Activated CD4-positive, alpha-beta memory T cell treated with anti-CD3 and anti-CD28 coated beads for 36 hours (primary cell): ENCODE measurements at regions of chr11 and their contacts with region 1.

Region 1: DNA sequence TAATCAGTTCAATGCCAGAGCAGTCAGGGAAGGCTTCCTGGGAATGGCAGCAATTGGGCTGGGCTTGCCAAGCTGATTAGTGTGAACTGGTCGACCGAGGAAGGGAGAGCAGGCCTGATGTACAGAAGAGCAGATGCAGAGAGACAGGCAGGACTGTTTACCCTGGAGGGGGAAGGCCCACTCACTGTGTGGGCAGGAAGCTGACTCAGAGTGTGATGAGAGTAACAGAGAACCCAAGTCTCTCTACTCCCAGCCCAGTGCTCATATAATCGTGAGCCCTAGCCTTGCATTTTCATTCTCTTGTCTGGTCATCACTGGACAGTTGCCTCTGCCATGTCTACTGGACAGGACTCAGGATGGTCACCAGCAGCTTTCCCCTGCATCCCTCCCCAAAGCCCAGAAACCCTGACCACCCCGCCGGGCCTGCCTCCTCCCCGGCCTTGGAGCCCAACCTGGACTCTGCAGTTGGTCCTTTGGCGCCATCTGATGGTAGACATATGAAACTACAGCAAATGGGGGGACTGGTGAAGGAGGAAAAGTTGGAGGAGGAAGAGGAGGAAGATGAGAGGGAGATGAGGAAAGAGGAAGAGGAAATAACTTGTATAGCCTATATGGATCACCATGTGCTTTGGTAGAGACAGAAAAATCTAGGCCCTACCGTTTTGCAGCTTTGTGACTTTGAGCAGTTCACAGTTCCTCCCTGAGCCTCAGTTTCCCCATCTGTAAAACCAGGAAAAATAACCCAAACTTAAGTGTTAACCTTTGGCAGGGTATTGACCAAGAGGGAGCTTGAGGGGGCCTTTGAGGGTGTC is 43.4 kb upstream of the PRDM11 start:
- DNase-seq: peak; percentile 86
- H3K4me3 Mint-ChIP-seq: peak overlapping the region; percentile 66
- H3K27ac Mint-ChIP-seq: peak overlapping the region; percentile 68
- H3K4me1 Mint-ChIP-seq: peaks cover 12% of the 10 kb centered on the region
- H3K27me3 Mint-ChIP-seq: peaks cover 12% of the 10 kb centered on the region

Region 2: DNA sequence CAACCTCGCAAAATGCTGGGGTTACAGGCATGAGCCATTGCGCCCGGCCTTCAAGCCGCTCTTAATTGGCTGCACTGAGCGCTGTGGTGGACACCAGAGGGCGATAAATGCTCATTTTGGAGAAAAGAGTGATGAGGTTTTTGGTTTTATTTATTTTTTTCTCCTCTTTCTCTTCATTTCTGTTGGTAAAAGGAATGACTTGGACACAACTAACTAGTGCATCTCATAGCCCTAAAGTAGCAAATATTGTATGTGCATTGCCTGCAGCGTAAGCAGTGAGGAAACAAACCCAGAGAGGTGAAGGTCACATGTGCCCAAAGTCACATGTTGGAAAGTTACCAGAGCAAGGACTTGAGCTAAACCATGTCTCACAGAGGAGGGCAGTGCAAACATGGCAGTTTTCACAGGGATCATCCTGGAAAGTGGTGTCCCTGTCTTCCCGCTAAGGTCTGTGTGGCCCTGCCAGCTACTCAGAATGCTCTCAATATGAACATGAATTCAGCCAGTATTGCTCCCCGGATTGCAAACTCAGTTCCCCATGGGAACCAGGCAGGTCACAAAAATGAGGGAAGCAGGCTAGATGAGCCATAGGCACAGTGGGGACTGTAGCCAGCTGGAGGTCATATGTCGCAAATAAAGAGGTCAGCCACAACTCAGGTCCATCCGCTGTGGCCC is 546.1 kb before region 1 on chr11:
- CTCF ChIA-PET with region 1: no interaction called
- POLR2A ChIA-PET with region 1: no interaction called
- intact Hi-C with region 1: loop called (anchors 10 kb)
- DNase-seq: peak; percentile 79
- H3K4me3 Mint-ChIP-seq: no peak overlapping the region
- H3K27ac Mint-ChIP-seq: no peak overlapping the region
- H3K4me1 Mint-ChIP-seq: peaks cover 29% of the 10 kb centered on the region
- H3K27me3 Mint-ChIP-seq: no peaks in the 10 kb centered on the region

Region 3: DNA sequence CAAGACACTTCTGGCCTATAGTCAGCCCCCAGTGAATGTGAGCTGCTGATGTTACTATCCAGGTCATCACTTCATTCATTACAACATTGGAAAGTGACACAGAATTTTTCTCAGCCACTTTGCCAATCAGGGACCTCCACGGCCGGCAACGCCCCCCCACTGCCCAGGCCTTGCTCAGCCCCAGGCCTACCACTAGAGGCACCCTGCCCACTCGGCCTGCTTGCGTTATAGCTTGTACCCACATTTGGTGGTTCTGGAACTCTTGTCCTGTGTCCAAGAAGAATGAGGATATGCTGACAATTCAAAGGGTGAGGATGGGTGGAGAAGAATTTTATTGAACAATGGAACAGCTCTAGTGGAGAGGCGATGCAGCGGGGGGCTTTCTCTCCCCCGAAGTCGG is 280.0 kb before region 1 on chr11:
- CTCF ChIA-PET with region 1: no interaction called
- POLR2A ChIA-PET with region 1: no interaction called
- intact Hi-C with region 1: no loop called
- DNase-seq: peak; percentile 23
- H3K4me3 Mint-ChIP-seq: no peak overlapping the region
- H3K27ac Mint-ChIP-seq: no peak overlapping the region
- H3K4me1 Mint-ChIP-seq: peaks cover 4% of the 10 kb centered on the region
- H3K27me3 Mint-ChIP-seq: no peaks in the 10 kb centered on the region

Region 4: GRCh38 chr11:44936525-44936924 is 166.5 kb before region 1 on chr11:
- CTCF ChIA-PET with region 1: interaction called, 1,143 read pairs
- POLR2A ChIA-PET with region 1: interaction called, 6 read pairs
- intact Hi-C with region 1: loop called (anchors 1 kb)
- DNase-seq: peak; percentile 89
- H3K4me3 Mint-ChIP-seq: no peak overlapping the region
- H3K27ac Mint-ChIP-seq: no peak overlapping the region
- H3K4me1 Mint-ChIP-seq: no peaks in the 10 kb centered on the region
- H3K27me3 Mint-ChIP-seq: no peaks in the 10 kb centered on the region

Region 5: DNA sequence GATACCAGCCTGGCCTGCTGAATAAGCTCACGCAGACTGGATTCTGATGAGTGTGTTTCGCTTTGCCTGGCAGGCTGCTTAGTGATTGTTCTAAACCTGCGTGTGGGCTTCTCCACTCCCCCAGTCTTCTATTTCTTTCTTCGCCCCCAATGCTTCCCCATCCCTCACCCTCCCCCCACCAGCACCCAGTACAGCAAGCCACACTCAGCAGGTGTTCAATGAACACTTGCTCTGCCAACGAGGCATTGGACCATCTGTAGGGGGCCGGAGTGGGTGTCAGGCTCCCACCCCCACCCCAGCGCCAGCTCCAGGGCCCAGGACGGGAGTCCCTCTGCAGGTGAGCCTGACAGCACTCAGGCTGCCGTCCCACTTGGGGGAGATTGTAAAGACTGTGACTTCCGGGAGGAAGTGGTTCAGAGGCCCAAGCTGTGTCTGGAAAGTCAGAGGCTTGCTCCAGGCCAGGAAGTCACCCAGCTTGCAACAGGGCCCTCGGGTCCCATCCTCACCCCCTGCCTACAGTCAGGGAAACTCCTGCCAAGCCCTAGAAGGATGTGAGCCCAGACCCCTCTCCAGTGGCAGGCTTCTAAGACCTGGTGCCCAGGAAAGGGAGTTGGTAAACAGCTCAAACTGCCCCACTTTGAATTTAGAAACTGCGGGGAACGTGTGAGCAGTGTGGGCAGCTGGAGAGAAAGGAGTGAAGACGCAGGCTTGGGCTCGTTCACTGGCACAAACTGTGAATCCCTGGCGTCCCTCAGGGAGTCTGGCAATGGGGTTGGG is 22.9 kb before region 1 on chr11:
- CTCF ChIA-PET with region 1: interaction called, 15 read pairs
- POLR2A ChIA-PET with region 1: no interaction called
- intact Hi-C with region 1: loop called (anchors 2 kb)
- DNase-seq: peak; percentile 75
- H3K4me3 Mint-ChIP-seq: peak overlapping the region; percentile 42
- H3K27ac Mint-ChIP-seq: peak overlapping the region; percentile 85
- H3K4me1 Mint-ChIP-seq: peaks cover 35% of the 10 kb centered on the region
- H3K27me3 Mint-ChIP-seq: no peaks in the 10 kb centered on the region

Region 6: GRCh38 chr11:45332276-45332934 is 229.4 kb after region 1 on chr11:
- CTCF ChIA-PET with region 1: interaction called, 117 read pairs
- POLR2A ChIA-PET with region 1: no interaction called
- intact Hi-C with region 1: no loop called
- DNase-seq: peak; percentile 49
- H3K4me3 Mint-ChIP-seq: no peak overlapping the region
- H3K27ac Mint-ChIP-seq: no peak overlapping the region
- H3K4me1 Mint-ChIP-seq: no peaks in the 10 kb centered on the region
- H3K27me3 Mint-ChIP-seq: peaks cover 3% of the 10 kb centered on the region